ENCODE measurements at regions of chr1 and their contacts with region 1.

Region 1: GRCh38 chr1:170521818-170522217 is 10.1 kb upstream of the GORAB start:
- DNase-seq: no peak
- H3K4me3 ChIP-seq: no peak overlapping the region
- H3K27ac ChIP-seq: no peak overlapping the region
- H3K4me1 ChIP-seq: no peaks in the 10 kb centered on the region
- H3K27me3 ChIP-seq: no peaks in the 10 kb centered on the region
- CTCF ChIP-seq: no peak
- POLR2A ChIP-seq: no peak

Region 2: DNA sequence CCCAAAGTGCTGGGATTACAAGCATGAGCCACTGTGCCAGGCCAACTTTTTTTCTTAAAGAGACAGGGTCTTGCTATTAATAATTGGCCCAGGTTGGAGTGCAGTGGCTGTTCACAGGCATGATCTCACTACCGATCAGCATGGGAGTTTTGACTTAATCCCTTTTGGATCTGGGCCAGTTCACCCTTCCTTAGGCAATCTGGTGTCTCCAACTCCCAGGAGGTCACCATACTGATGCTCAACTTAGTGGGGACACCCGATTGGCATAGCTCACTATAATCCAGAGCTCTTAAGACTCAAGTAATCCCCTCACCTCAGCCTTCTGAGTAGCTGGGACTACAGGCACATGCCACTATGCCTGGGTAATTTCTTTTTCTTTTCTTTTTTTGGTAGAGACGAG is 563.9 kb before region 1 on chr1:
- CTCF ChIA-PET with region 1: no interaction called
- POLR2A ChIA-PET with region 1: interaction called, 10 read pairs
- dilution Hi-C with region 1: no loop called
- intact Hi-C with region 1: no loop called
- DNase-seq: no peak
- H3K4me3 ChIP-seq: no peak overlapping the region
- H3K27ac ChIP-seq: no peak overlapping the region
- H3K4me1 ChIP-seq: no peaks in the 10 kb centered on the region
- H3K27me3 ChIP-seq: no peaks in the 10 kb centered on the region
- CTCF ChIP-seq: no peak
- POLR2A ChIP-seq: no peak